Endothelial cell of umbilical vein (primary cell): ENCODE measurements at regions of chr2 and their contacts with region 1.

Region 1: DNA sequence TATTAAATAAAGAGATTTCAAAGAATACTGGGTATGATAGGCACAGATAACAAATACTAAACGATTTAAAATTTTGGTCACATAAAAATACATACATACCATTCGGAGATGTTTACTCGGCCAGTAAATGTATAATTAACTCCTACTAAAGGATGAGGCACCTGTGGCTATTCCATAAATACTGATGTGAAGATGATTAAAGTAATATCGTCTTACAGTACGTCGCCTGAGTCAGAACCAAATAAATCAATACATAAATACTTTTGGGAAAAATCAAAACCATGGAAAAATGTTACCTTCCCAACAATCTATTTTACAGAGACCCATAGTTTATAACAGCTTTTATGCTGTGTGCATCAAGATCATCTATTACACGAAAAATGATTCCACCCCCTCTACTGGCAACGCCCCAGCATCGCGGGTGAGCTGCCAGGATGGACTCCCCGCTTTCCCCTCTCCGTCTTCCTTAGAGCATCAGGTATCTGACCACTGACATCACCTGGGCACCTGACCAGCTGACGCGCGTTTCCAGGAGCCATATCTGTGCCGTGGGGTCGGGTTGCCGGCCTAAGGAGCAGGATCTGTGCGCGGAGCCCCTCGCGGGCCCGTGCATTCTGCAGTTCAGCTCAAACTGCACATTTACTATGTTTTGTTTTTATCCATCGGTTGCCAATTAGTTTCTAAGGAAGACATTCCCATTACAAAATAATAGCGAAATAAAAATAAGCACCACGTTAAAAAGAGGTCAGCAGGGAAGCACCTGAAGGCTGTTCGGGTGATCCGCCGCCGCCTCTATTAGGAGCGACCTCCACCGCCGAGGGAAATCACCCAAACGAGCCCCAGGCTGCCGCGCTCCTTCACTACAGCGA is 901 bp downstream of the ICA1L start:
- DNase-seq: peak; percentile 81
- H3K4me3 ChIP-seq: peak overlapping the region; percentile 56 to 68 (median 65)
- H3K27ac ChIP-seq: peak overlapping the region; percentile 2
- H3K4me1 ChIP-seq: peaks cover 6% of the 10 kb centered on the region
- H3K27me3 ChIP-seq: no peaks in the 10 kb centered on the region
- CTCF ChIP-seq: peak; percentile 58 to 63
- POLR2A ChIP-seq: no peak

Region 2: GRCh38 chr2:202588647-202589581 is 281.8 kb before region 1 on chr2:
- CTCF ChIA-PET with region 1: interaction called, 97 read pairs
- POLR2A ChIA-PET with region 1: no interaction called
- dilution Hi-C with region 1: no loop called
- intact Hi-C with region 1: loop called (anchors 1 kb)
- DNase-seq: peak; percentile 68
- H3K4me3 ChIP-seq: no peak overlapping the region
- H3K27ac ChIP-seq: no peak overlapping the region
- H3K4me1 ChIP-seq: no peaks in the 10 kb centered on the region
- H3K27me3 ChIP-seq: no peaks in the 10 kb centered on the region
- CTCF ChIP-seq: peak; percentile 85 to 90
- POLR2A ChIP-seq: no peak

Region 3: DNA sequence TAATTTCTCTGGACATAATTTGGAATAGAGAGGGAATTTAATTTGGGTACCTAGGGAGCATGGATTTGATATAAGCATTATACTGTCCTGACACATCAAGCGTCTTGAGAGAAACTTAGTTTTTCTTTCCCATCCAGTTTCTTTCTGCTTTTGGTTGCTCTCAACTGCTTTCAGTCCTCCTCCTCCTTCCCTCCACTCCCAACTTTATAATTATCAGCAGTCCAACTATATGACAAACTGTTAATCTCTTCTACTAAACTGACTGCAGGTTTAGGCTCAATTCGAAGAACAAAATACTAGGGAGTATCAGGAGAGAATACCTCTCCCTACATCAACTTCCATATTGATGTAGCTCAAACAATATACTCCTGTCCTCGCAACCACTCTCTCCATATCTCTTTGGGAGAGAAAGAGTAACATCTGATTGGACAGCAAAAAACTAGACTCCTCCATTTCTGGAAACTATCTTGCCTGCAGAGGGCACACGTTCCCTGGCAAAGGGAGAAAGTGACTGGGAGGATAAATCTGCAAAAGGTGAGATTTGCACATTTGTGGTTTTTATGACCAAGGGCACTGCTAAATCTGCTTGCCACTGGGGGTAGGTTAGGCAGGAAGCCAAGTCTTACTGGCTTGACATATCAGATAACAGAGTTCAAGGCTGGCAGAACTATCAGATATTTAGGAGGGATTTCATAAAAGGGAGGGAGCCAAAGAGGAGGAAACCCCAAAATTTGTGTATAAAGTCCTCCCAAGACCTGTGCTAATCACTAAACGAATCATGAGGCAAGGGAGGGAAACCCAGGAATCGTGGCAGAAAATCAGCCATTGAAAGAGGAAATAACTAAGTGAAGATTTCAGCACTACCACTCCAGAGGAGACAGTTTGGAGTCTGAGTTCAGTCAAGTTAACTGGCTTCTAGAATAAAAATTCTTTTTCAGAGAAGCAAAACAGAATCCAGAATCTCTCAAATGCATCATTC is 39.1 kb before region 1 on chr2:
- CTCF ChIA-PET with region 1: interaction called, 4 read pairs
- POLR2A ChIA-PET with region 1: no interaction called
- dilution Hi-C with region 1: no loop called
- intact Hi-C with region 1: loop called (anchors 1 kb)
- DNase-seq: peak; percentile 75
- H3K4me3 ChIP-seq: no peak overlapping the region
- H3K27ac ChIP-seq: no peak overlapping the region
- H3K4me1 ChIP-seq: peaks cover 15% of the 10 kb centered on the region
- H3K27me3 ChIP-seq: no peaks in the 10 kb centered on the region
- CTCF ChIP-seq: peak; percentile 56 to 61
- POLR2A ChIP-seq: no peak

Region 4: DNA sequence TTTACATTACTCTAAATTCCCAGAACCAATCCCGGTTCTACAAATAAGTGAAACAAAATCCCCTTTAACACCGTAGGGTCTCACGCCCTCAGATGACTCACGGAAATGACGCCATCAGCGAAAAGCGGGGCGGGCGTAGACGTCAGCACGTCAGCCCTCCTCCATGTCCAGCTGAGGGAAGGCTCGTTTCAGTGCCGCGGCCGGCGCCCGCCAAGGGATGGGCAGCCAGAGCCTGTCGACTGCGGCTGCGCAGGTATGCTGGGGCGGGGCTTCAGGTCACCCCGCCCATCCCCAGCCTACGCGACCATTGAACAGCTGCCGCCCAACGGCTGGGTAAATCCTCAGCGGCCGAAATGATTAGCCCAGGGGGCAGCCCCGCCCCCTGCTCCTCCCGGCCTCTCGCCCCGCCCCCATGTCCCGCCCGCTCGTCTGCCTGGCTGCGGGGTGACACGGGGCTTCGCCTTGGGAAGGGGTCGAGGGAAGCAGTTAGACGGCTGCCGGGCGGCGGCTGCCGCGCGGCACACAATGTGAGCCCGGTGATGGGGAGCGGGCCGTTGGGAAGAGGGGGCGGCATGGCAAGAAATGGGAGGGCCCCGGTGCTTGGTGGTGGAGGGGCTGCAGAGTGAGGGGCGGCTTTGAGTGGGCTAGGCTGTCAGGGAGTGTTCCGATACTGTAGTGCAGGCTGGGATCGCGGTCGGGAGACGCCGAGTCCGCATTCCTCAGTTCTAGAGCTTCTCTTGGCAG is 144.0 kb after region 1 on chr2 and contains the start of gene NBEAL1:
- CTCF ChIA-PET with region 1: no interaction called
- POLR2A ChIA-PET with region 1: no interaction called
- dilution Hi-C with region 1: no loop called
- intact Hi-C with region 1: loop called (anchors 5 kb)
- DNase-seq: peak; percentile 100
- H3K4me3 ChIP-seq: peak within 1 kb of the TSS; percentile 56 to 96 (median 92)
- H3K27ac ChIP-seq: peak within 1 kb of the TSS; percentile 93
- H3K4me1 ChIP-seq: peaks cover 22% of the 10 kb centered on the region
- H3K27me3 ChIP-seq: peaks cover 8 to 13% of the 10 kb centered on the region in 2 experiments
- CTCF ChIP-seq: no peak
- POLR2A ChIP-seq: peak; percentile 66
- total RNA-seq, gene NBEAL1: 23.3 and 23.4 TPM in 2 replicates